Body of pancreas (tissue), 4 donors: ENCODE measurements at regions of chr7 and their contacts with region 1.

Region 1: DNA sequence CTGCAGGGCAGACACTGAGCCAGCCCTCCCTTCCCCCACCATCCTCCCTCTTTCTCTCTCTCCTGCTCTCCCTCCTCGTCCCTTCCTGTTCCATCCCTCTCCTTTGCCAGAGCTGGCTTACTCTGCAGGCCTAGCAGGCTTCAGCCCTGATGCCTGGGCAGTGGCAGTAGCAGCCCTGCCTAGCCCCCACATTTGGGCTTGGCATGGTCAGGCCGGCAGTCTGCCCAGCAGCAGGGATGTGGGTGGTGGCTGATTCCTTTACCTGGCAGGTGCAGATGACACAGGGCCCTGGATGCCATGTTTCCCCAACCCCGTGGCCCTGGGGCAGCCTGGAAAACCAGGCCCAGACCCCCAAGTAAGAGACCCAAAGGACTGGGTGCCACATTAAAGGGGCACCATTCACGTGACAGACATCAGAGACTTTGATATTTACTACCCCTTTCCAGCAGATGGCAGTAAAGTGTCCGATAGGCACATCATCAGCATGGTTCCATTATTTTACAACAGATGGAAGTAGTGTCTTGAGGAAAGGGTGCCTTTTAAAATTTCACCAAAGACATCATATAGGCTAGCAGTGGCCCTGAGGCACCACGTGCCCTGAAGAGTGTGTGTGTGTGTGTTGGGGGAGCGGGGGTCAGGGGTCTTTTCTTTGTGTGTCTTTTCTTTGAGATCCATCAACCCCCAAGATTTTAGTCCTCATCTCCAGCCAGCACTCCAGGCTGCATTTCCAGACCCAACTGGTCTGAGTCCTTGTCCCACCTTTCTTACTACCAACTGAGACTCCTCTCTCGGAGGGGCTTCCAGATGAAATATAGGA is 5.9 kb downstream of the KCP start:
- DNase-seq: peak in 1 of 4 donors; percentile 42
- ATAC-seq: peak; percentile 62
- H3K4me3 ChIP-seq: no peak overlapping the region
- H3K27ac ChIP-seq: no peak overlapping the region
- H3K4me1 ChIP-seq: no peaks in the 10 kb centered on the region
- H3K27me3 ChIP-seq: no peaks in the 10 kb centered on the region
- CTCF ChIP-seq: peak; percentile 33 to 67 (median 59)
- POLR2A ChIP-seq: no peak

Region 2: GRCh38 chr7:128770233-128770632 is 134.4 kb before region 1 on chr7:
- intact Hi-C with region 1: no loop called
- DNase-seq: no peak
- ATAC-seq: peak; percentile 35
- H3K4me3 ChIP-seq: no peak overlapping the region
- H3K27ac ChIP-seq: no peak overlapping the region
- H3K4me1 ChIP-seq: peaks cover 16% of the 10 kb centered on the region
- H3K27me3 ChIP-seq: no peaks in the 10 kb centered on the region
- CTCF ChIP-seq: no peak
- POLR2A ChIP-seq: no peak

Region 3: GRCh38 chr7:128841921-128842651 is 62.5 kb before region 1 on chr7:
- intact Hi-C with region 1: no loop called
- DNase-seq: peak; percentile 37 to 64 (median 47)
- ATAC-seq: peak; percentile 54
- H3K4me3 ChIP-seq: no peak overlapping the region
- H3K27ac ChIP-seq: no peak overlapping the region
- H3K4me1 ChIP-seq: no peaks in the 10 kb centered on the region
- H3K27me3 ChIP-seq: no peaks in the 10 kb centered on the region
- CTCF ChIP-seq: peak; percentile 21 to 81 (median 56)
- POLR2A ChIP-seq: no peak

Region 4: GRCh38 chr7:129091484-129092002 is 187.0 kb after region 1 on chr7:
- intact Hi-C with region 1: loop called (anchors 5 kb)
- DNase-seq: peak; percentile 82 to 90 (median 88)
- ATAC-seq: peak; percentile 95
- H3K4me3 ChIP-seq: no peak overlapping the region
- H3K27ac ChIP-seq: no peak overlapping the region
- H3K4me1 ChIP-seq: no peaks in the 10 kb centered on the region
- H3K27me3 ChIP-seq: no peaks in the 10 kb centered on the region
- CTCF ChIP-seq: peak; percentile 92 to 99 (median 97)
- POLR2A ChIP-seq: no peak

Region 5: GRCh38 chr7:129188372-129188891 is 283.8 kb after region 1 on chr7 and contains the start of gene SMO:
- intact Hi-C with region 1: no loop called
- DNase-seq: peak; percentile 46 to 64 (median 57)
- ATAC-seq: peak; percentile 83
- H3K4me3 ChIP-seq: peak within 1 kb of the TSS; percentile 65 to 86
- H3K27ac ChIP-seq: peak within 1 kb of the TSS in 2 of 4 donors; percentile 34 to 55
- H3K4me1 ChIP-seq: peaks cover 9% of the 10 kb centered on the region
- H3K27me3 ChIP-seq: no peaks in the 10 kb centered on the region
- CTCF ChIP-seq: no peak
- POLR2A ChIP-seq: peak; percentile 18 to 45 (median 36)
- total RNA-seq, gene SMO: 6.5 to 12.2 TPM